ENCODE measurements at regions of chr6 and their contacts with region 1.

Region 1: DNA sequence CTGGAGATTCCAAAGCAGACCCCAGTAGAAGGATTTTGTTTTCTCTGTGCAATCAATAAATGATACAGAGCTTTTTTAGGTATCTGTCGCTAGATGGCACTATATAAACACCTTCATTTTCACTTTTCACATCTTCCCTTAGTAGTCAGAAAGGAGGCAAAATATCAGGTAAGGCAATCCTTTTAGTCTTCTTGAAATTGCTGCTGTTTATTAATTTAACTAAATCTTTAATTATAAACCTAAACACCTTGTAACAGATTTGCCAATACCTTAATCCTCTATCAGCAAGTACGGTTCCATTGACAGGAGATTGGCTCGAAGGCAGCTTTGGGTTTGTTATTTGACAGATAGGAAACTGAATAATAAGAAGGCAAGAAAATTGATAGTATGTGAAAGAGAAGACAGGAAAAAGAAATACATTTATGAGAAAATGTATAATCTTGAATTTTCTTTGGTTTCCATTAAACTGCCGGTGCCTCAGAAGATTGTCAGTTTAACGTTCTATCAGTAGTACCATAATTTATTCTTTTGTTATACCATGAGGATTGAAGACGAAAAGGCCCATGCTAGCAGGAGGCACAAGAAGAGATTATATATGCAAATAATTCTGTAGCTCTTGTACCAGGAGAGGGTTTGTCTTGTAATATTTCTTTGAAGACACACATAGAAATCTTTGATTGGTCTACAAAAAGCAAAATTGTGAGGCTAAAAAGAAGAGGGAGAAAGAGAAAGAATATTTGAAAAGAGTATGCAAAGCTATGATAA is 23.5 kb upstream of the IBTK start:
- DNase-seq: no peak
- H3K4me3 Mint-ChIP-seq: no peak overlapping the region
- H3K27ac Mint-ChIP-seq: no peak overlapping the region
- H3K4me1 Mint-ChIP-seq: peaks cover 2% of the 10 kb centered on the region
- H3K27me3 Mint-ChIP-seq: no peaks in the 10 kb centered on the region

Region 2: GRCh38 chr6:82507112-82507511 is 236.0 kb after region 1 on chr6:
- CTCF ChIA-PET with region 1: no interaction called
- POLR2A ChIA-PET with region 1: no interaction called
- intact Hi-C with region 1: loop called (anchors 10 kb)
- DNase-seq: no peak
- H3K4me3 Mint-ChIP-seq: no peak overlapping the region
- H3K27ac Mint-ChIP-seq: no peak overlapping the region
- H3K4me1 Mint-ChIP-seq: no peaks in the 10 kb centered on the region
- H3K27me3 Mint-ChIP-seq: peaks cover 10% of the 10 kb centered on the region

Region 3: GRCh38 chr6:82712852-82713251 is 441.8 kb after region 1 on chr6:
- CTCF ChIA-PET with region 1: interaction called, 8 read pairs
- POLR2A ChIA-PET with region 1: no interaction called
- intact Hi-C with region 1: loop called (anchors 1 kb)
- DNase-seq: no peak
- H3K4me3 Mint-ChIP-seq: no peak overlapping the region
- H3K27ac Mint-ChIP-seq: no peak overlapping the region
- H3K4me1 Mint-ChIP-seq: no peaks in the 10 kb centered on the region
- H3K27me3 Mint-ChIP-seq: peaks cover 16% of the 10 kb centered on the region

Region 4: DNA sequence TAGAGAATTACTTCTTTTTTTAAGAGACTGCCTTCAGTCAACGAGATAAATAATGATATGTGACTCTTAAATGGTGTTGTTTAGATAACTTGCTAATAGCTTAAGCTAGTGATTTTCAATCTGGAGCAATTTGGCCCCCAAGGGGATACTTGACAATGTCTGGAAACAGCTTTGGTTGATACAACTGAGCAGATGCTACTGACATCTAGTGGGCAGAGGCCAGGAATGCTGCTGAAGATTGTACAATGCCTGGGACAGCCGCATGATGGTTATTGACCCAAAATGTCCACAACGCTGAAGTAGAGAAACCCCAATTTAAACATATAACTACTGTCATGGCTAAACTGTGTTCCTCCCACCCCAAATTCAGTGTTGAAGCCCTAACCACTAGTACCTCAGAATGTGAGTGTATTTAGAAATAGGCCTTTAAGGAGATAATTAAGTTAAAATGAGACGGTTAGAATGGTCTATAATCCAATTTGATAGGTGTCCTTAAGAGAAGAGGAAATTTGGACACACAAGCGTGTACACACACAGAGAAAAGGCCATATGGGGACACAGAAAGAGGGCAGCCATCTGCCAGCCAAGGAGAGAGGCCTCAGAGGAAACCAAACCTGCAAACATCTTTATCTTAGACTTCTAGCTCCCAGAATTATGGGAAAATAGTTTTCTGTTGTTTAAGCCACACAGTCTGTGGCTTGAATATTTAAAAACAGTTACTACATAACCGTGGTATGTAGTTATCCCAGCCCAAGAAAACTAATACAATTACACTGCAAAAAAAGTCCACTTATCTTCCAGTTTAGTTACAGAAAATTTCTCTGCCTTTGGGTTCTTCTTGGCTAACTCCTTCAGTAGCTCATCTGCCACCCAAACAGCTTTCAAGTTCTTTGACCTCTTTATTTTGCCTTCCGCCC is 944.3 kb after region 1 on chr6:
- CTCF ChIA-PET with region 1: no interaction called
- POLR2A ChIA-PET with region 1: no interaction called
- intact Hi-C with region 1: loop called (anchors 2 kb)
- DNase-seq: peak; percentile 70
- H3K4me3 Mint-ChIP-seq: no peak overlapping the region
- H3K27ac Mint-ChIP-seq: no peak overlapping the region
- H3K4me1 Mint-ChIP-seq: no peaks in the 10 kb centered on the region
- H3K27me3 Mint-ChIP-seq: peaks cover 5% of the 10 kb centered on the region